ENCODE measurements at regions of chr21 and their contacts with region 1.

Region 1: GRCh38 chr21:43718872-43719747 is at the start of gene PDXK:
- DNase-seq: peak in 1 of 2 experiments; percentile 90
- H3K4me3 ChIP-seq: peak within 1 kb of the TSS; percentile 60 to 90 (median 80)
- H3K27ac ChIP-seq: peak within 1 kb of the TSS; percentile 68; the same call in 1 of the 2 replicates
- H3K4me1 ChIP-seq: peaks cover 0 to 21% (median 14%) of the 10 kb centered on the region in 4 experiments; a peak in 6 of 7 replicates
- H3K27me3 ChIP-seq: peaks cover 0 to 10% (median 7%) of the 10 kb centered on the region in 4 experiments; a peak in 4 of 7 replicates
- CTCF ChIP-seq: no peak
- EP300 ChIP-seq: no peak
- POLR2A ChIP-seq: peak in 1 of 2 experiments; percentile 31; a peak in 1 of 3 replicates
- RAD21 ChIP-seq: no peak; a peak in 1 of 4 replicates
- total RNA-seq, gene PDXK: 112 and 116 TPM in 2 replicates

Region 2: DNA sequence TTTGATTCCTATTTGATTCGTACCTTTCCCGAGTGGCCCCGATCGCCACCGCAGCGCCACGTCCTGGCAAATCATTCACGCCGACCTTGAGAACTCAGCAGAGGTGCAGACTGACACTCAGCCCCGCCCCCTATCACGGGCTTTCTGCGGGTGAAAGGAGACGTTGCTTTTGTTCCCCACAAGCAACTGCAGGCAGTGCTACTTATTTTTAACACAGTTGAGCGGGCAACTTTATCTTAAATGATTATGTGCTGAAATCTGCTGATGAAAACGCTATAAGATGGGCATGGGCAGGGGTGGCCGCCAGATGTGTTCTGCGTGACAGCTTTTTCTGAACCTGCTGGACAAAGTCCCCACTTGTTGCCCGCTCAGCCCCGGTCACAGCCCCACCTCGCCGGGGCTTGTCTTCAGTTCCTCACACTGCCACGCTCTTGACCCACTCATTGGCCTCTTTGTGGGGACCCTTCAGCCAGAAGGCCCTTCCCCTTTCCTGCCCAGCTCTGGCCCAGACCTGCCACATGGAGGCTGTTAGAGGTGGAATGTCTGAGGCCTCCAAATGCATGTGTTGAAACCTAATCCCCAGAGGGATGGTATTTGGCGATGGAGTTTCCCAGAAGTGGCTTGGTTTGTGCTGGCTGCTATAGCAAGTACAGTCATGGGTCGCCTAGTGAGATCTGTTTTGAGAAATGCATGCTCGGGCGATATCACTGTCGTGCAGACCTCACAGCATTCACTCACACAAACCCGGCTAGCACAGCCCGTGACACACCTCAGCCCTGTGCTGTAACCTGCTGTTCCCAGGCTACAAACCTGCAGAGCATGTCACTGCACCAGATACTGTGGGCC is 15.9 kb before region 1 on chr21:
- CTCF ChIA-PET with region 1: interaction called, 6 read pairs
- POLR2A ChIA-PET with region 1: interaction called, 10 read pairs
- DNase-seq: peak in 1 of 2 experiments; percentile 67
- H3K4me3 ChIP-seq: no peak overlapping the region
- H3K27ac ChIP-seq: no peak overlapping the region
- H3K4me1 ChIP-seq: peaks cover 0 to 14% (median 5%) of the 10 kb centered on the region in 4 experiments; a peak in 6 of 7 replicates
- H3K27me3 ChIP-seq: no peaks in the 10 kb centered on the region
- CTCF ChIP-seq: no peak
- EP300 ChIP-seq: no peak
- POLR2A ChIP-seq: no peak
- RAD21 ChIP-seq: no peak

Region 3: GRCh38 chr21:43740497-43741156 is 21.5 kb after region 1 on chr21:
- CTCF ChIA-PET with region 1: interaction called, 3 read pairs
- POLR2A ChIA-PET with region 1: interaction called, 17 read pairs
- DNase-seq: peak; percentile 68 to 69
- H3K4me3 ChIP-seq: no peak overlapping the region
- H3K27ac ChIP-seq: peak overlapping the region; percentile 18; the same call in 1 of the 2 replicates
- H3K4me1 ChIP-seq: peaks cover 0 to 9% (median 4%) of the 10 kb centered on the region in 4 experiments; a peak in 5 of 7 replicates
- H3K27me3 ChIP-seq: no peaks in the 10 kb centered on the region
- CTCF ChIP-seq: no peak
- EP300 ChIP-seq: no peak
- POLR2A ChIP-seq: no peak
- RAD21 ChIP-seq: no peak

Measured in H1 (cell line).